ENCODE measurements at regions of chr17 and their contacts with region 1.

Region 1: DNA sequence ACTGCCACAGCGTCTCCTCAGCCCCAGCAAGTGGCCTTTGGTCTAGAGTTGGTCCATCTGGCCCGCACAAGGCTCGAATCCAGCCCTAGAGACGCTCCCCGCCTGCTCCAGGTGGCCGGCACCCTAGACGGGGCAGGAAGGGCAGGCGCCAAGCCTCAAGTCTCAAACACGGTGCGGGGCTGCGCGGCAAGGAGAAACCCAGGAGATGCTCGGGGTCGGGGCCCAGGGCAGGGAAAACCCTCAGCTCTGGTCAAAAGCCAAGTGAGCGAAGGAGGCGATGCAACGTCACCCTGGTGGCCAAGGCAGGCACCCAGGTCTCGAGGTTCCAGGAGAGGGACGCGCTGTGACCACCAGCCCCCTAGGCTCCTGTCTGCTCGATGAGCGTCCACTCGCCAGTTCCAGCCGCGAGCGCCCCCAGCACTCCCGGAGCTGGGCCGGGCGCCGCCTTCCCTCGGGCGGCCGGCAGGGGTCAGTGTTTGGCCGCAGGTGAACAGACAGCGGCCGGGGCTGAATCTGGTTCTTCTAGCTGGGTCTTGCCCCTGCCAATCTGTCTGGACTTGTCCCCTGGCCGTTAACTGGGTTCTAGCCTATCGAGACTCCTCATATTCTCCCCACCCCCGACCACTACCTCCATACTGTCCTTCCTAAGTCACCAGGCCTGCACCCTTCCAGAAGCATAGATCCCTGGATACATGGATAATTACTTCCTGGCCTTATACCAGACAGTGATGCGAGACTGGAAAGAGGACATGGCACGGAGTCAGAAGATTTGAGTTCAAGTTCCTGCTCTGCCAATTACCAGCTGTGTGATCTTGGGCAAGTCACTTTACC is 44.0 kb downstream of the PRAC1 start:
- DNase-seq: peak; percentile 71
- H3K4me3 Mint-ChIP-seq: no peak overlapping the region
- H3K27ac Mint-ChIP-seq: no peak overlapping the region
- H3K4me1 Mint-ChIP-seq: no peaks in the 10 kb centered on the region
- H3K27me3 Mint-ChIP-seq: peaks cover 53% of the 10 kb centered on the region

Region 2: DNA sequence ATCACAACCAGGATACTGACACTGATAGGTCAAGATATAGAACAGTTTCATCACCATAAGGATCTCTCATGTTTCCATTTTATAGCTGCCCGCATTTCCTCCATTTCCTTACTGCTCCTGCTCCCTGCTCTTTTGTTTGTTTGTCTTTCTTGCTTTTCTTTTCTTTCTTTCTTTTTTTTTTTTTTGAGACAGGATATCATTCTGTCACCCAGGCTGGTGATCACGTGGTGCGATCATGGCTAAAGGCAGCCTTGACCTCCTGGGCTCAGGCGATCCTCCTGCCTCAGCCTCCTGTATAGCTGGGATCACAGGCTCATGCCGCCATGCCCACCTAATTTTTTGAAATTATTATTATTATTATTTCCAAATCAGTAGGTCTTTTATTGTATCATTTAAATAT is 12.3 kb after region 1 on chr17:
- CTCF ChIA-PET with region 1: interaction called, 24 read pairs
- POLR2A ChIA-PET with region 1: no interaction called
- DNase-seq: no peak
- H3K4me3 Mint-ChIP-seq: no peak overlapping the region
- H3K27ac Mint-ChIP-seq: no peak overlapping the region
- H3K4me1 Mint-ChIP-seq: no peaks in the 10 kb centered on the region
- H3K27me3 Mint-ChIP-seq: peaks cover 31% of the 10 kb centered on the region

Region 3: DNA sequence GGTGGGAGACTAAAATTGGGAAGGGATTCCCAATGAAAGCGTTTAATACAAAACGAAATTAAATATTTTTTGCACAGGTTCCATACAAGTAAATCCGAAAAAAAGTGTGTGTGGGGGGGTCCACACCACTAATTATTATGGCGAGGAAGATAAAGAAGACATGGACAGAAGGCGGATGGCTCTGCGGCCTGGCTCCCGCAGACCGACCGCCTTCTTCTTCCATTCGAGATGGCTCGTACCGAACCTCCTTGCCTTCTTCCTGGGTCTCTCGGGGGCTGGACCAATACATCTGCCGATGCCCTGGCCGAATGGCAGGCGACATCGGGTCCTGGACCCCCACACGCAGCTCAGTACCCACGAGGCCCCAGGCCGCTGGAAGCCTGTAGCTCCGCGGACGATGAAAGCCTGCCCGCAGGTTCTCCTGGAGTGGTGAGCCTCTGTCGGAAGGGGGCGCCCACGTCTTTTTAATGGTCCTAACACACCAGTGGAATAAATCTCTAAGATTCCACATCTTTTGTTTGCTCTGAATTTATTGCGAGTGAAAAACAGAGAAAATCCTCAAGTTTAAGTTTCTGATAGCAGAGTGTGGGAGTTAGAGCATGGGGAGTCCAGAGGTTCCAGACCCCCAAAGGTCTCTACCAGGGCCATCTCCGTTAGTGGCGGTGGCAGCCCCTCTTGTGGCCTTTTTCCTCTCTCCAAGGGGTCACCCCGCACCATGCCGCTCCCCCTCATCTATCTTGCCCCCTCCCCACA is 46.1 kb after region 1 on chr17:
- CTCF ChIA-PET with region 1: interaction called, 23 read pairs
- POLR2A ChIA-PET with region 1: no interaction called
- DNase-seq: peak; percentile 82
- H3K4me3 Mint-ChIP-seq: no peak overlapping the region
- H3K27ac Mint-ChIP-seq: no peak overlapping the region
- H3K4me1 Mint-ChIP-seq: peaks cover 36% of the 10 kb centered on the region
- H3K27me3 Mint-ChIP-seq: peaks cover 96% of the 10 kb centered on the region

Region 4: DNA sequence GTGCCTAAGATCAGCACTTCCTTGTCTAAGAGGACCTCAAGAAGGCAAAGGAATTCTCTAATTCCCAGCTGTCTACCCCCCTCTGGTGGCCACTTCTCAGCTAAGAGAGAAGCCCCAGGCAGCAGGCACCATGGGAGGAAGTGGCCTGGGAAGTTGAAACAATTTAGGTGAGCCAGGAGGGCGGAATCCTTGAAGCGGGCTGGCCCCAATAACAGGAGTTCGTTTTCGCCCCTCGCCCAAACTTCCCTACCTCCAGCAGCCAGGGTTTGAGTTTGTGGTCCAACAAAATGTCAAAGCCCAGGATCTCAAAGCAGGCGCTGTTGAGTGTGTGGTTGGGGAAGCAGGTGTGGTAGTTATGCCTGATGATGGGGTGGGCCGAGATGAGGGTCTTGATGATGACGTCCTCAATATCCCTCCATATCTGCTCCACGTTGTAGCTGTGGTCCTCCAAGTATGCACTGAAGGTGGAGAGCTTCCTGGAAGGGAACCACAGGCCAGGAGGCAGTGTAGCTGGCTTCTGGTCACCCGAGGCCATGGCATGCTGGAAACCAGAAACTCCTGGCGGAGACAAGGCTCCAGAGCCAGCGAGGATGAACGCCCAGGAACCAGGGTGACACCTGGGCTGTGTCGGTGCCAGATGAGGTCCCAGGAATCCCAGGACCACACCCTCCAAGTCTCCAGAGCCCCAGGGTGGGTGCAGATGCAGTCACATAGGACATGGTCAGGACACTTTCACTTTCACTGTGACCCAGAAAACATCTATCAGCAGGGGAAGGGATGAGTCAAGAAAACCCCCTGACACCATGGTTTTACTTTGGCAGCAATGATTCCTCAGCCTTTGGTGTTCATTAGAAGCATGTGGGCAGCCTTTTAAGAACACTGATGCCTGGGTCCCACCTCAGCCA is 113.0 kb after region 1 on chr17:
- CTCF ChIA-PET with region 1: interaction called, 14 read pairs
- POLR2A ChIA-PET with region 1: no interaction called
- DNase-seq: no peak
- H3K4me3 Mint-ChIP-seq: no peak overlapping the region
- H3K27ac Mint-ChIP-seq: no peak overlapping the region
- H3K4me1 Mint-ChIP-seq: peaks cover 12% of the 10 kb centered on the region
- H3K27me3 Mint-ChIP-seq: peaks cover 44% of the 10 kb centered on the region

Region 5: GRCh38 chr17:49031965-49032928 is 353.9 kb after region 1 on chr17:
- CTCF ChIA-PET with region 1: interaction called, 12 read pairs
- POLR2A ChIA-PET with region 1: no interaction called
- DNase-seq: peak; percentile 55
- H3K4me3 Mint-ChIP-seq: no peak overlapping the region
- H3K27ac Mint-ChIP-seq: no peak overlapping the region
- H3K4me1 Mint-ChIP-seq: no peaks in the 10 kb centered on the region
- H3K27me3 Mint-ChIP-seq: peaks cover 5% of the 10 kb centered on the region